ENCODE measurements at regions of chr9 and their contacts with region 1.

Region 1: DNA sequence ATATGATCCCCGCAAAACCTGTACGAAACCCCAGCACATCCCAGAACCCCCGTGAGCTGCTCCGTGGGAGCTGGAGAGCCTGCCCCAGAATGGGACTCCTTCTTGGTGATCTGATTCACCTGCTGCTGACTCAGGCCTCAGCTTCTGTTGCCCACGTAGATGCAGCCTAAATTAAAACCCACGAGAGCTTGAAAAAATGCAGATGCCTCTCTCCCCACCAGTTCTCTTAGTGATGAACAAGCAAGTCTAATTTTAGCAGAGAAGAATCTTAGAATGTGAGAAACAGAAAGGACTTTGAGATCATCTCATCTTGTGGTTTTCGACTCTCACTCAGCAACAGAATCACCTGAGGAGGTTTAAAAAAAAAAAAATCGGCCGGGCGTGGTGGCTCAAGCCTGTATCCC is 57.6 kb downstream of the TMOD1 start:
- DNase-seq: no peak
- H3K4me3 ChIP-seq: no peak overlapping the region
- H3K27ac ChIP-seq: no peak overlapping the region
- H3K4me1 ChIP-seq: no peaks in the 10 kb centered on the region
- H3K27me3 ChIP-seq: no peaks in the 10 kb centered on the region
- CTCF ChIP-seq: no peak
- POLR2A ChIP-seq: no peak

Region 2: DNA sequence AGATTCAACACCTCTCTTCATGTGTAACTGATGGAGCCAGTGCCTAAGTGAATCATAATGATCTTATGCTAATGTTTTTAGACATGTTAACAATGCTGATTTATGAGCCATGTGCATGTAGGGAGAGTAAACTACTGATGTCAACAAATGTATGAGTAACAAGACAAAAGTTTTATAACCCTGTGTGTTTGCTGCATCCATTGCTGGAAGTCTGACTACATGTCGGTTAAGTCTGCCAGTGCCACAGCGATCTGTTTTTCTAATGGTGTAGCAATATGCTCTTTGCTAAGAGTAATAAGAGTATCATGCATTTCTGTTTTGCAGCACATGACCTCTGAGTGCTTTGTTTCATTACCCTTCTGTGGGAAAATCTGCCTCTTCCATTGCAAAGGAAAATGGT is 84.1 kb before region 1 on chr9:
- intact Hi-C with region 1: no loop called
- DNase-seq: no peak
- H3K4me3 ChIP-seq: no peak overlapping the region
- H3K27ac ChIP-seq: no peak overlapping the region
- H3K4me1 ChIP-seq: no peaks in the 10 kb centered on the region
- H3K27me3 ChIP-seq: no peaks in the 10 kb centered on the region
- CTCF ChIP-seq: no peak
- POLR2A ChIP-seq: no peak

Region 3: DNA sequence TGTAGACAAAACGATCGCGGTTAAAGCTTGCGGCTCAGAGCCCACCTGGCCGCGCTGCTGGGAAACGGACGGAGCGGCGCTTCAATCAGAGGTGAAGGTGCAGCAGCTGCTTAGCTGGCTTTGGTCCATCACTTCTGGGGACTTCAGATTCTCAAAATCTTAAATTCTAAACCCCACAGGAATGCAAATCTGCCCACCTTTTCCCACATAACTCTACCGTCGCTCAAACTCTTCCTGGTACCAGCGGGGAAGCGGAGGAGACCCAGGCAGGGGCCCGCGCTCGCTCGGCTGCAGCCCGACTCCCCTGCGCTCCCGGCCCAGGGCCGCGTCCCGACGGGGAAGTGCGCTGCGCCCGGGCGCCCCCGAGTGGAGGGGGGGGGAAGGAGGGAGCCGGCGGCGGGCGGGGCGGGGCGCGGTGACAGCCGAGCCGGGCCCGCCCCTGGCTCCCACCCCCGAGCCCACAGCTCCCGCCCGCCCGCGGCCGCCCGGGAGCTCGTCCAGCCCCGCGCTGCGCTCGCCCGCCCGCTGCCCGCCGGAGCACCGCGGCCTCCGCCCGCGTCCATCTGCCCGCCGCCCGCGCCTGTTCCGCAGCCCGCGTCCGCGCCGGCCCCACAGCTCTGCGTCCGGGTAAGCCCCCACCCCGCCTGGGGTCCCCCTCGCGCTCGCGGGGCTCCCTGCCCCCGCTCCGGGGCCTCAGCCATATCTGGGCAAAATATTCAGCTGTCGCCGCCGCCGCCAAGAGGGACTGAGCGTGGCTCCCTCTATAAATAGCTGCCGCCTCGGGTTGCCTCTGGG is 57.7 kb before region 1 on chr9 and contains the start of gene TMOD1:
- intact Hi-C with region 1: loop called (anchors 5 kb)
- DNase-seq: peak; percentile 56
- H3K4me3 ChIP-seq: peak within 1 kb of the TSS; percentile 72 to 82
- H3K27ac ChIP-seq: peak within 1 kb of the TSS; percentile 49 to 75
- H3K4me1 ChIP-seq: peaks cover 4% of the 10 kb centered on the region
- H3K27me3 ChIP-seq: no peaks in the 10 kb centered on the region
- CTCF ChIP-seq: peak in 1 of 4 experiments; percentile 28
- POLR2A ChIP-seq: no peak
- total RNA-seq, gene TMOD1: 7.0 to 8.0 TPM

Region 4: DNA sequence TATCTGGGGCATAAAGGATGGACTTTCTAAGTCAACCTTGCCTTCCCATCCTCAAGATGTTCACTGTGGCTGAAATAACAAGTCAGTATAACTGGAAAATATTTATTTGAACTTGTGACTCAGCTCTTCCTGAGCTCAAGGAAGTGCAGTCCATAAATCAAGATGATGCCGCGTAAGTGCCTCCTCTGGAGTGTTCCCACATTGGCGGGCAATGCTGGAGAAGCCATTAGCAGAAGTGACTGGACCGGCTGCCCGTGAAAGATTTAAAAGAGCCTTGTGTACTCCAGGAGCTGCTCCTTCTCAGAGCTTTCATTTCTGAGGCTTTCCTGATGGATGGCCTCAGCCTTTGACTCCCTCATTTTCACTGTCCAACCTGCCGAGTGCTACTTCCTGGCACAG is 40.2 kb before region 1 on chr9:
- intact Hi-C with region 1: loop called (anchors 5 kb)
- DNase-seq: peak; percentile 80
- H3K4me3 ChIP-seq: no peak overlapping the region
- H3K27ac ChIP-seq: peak overlapping the region; percentile 47 to 68
- H3K4me1 ChIP-seq: peaks cover 6% of the 10 kb centered on the region
- H3K27me3 ChIP-seq: no peaks in the 10 kb centered on the region
- CTCF ChIP-seq: no peak
- POLR2A ChIP-seq: no peak

Region 5: DNA sequence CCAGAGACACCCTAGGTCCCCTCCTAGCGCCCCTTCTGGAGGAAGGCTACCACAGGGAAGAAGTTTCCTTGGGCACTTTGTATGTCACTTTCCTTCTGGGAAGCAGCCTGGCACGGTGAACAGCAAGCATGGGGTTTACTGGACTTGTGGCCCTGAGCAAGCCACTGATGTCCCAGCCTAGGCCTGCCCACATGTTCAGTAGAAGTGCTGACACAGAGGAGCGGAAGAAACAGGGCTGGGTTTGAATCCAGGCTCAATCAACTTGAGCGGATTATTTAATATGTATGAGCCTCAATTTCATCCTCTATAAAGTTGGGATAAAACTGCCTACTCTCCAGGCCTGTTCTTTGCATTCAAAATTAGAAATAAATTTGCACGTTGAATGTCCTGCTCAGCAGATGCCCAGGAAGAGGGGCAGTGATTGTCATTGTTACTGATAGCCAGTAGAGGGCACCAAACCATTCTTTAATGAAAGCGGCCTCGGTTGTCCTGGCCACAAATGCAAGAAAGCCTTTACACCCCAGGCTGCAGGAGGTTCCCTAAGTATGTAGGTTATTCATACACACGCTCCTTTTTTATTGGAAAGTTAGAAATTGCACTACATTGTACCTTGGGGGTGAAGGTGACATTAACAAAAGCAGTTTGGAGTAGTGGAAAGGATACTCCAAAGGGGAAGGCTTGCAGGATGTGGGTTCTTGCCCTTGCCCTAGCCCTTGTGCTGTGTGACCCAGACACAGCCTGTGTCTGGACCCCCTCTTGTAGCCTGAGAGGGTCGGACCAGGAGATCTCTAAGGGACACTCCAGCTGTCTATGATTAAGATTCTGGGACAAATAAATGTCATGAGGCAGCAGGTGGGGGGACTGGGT is 151.5 kb after region 1 on chr9:
- intact Hi-C with region 1: no loop called
- DNase-seq: peak; percentile 40
- H3K4me3 ChIP-seq: no peak overlapping the region
- H3K27ac ChIP-seq: no peak overlapping the region
- H3K4me1 ChIP-seq: no peaks in the 10 kb centered on the region
- H3K27me3 ChIP-seq: no peaks in the 10 kb centered on the region
- CTCF ChIP-seq: peak; percentile 52 to 80 (median 78)
- POLR2A ChIP-seq: no peak

Region 6: DNA sequence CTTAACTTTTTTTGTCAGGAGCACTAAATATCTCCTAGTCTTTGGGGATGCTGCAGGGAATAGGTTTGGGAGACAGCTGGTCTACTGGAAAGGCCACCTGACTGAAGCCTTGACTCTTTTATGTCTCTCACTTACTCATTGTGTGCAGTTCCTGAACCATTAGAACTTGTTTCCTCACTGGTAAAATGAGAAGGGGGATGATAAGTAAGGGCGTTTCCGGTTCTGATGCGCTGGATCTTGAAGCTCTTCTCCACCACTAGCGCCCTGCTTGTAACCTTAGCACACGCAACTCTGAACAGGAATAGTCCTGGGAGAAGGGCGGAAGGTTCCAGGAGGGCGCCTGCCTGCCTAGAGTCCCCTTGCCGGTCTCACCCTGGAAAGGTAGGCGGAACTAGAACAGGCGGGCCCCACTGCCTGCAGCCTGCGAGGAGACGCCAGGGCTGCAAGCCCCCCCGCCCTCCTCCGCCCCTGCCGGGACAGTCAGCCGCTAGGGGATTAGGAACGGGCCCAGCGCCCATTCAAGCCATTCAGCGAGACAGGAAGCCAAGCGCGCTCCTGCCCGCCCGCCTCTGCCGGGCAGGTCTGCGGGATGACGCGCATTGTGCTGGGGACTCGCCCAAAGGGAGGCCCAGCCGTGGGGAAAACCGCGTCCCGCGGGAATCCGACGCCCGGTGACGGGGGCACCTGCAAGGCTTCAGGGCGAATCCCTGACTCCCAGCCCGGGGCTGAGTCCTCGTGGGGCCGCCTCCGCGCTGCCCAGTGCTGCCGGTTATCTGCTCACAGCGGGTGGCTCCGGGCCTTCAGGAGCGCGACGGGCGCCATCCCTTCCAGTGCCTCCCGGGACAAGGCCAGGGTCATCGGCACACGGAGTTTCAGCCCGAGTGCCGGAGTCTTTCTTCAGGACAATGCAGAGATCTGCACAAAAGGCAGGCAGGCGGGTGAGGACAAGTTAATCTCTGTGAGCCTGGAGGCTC is 182.0 kb after region 1 on chr9:
- intact Hi-C with region 1: no loop called
- DNase-seq: peak; percentile 60
- H3K4me3 ChIP-seq: peak overlapping the region; percentile 16 to 30
- H3K27ac ChIP-seq: peak overlapping the region in 1 of 2 donors; percentile 6
- H3K4me1 ChIP-seq: no peaks in the 10 kb centered on the region
- H3K27me3 ChIP-seq: no peaks in the 10 kb centered on the region
- CTCF ChIP-seq: peak in 2 of 4 experiments; percentile 38 to 50
- POLR2A ChIP-seq: no peak

Region 7: GRCh38 chr9:98056269-98057137 is 497.4 kb after region 1 on chr9 and contains the start of gene NANS:
- intact Hi-C with region 1: no loop called
- DNase-seq: peak; percentile 95
- H3K4me3 ChIP-seq: peak within 1 kb of the TSS; percentile 88 to 94
- H3K27ac ChIP-seq: peak within 1 kb of the TSS; percentile 97
- H3K4me1 ChIP-seq: no peaks in the 10 kb centered on the region
- H3K27me3 ChIP-seq: no peaks in the 10 kb centered on the region
- CTCF ChIP-seq: peak in 1 of 4 experiments; percentile 3
- POLR2A ChIP-seq: peak; percentile 99
- total RNA-seq, gene NANS: 160 to 318 TPM